Activated CD4-positive, alpha-beta T cell treated with anti-CD3 and anti-CD28 coated beads, Interleukin-2, amount 10 ng/mL, durations not matched to agents 24 days and 14 days (primary cell): ENCODE measurements at regions of chr12 and their contacts with region 1.

Region 1: DNA sequence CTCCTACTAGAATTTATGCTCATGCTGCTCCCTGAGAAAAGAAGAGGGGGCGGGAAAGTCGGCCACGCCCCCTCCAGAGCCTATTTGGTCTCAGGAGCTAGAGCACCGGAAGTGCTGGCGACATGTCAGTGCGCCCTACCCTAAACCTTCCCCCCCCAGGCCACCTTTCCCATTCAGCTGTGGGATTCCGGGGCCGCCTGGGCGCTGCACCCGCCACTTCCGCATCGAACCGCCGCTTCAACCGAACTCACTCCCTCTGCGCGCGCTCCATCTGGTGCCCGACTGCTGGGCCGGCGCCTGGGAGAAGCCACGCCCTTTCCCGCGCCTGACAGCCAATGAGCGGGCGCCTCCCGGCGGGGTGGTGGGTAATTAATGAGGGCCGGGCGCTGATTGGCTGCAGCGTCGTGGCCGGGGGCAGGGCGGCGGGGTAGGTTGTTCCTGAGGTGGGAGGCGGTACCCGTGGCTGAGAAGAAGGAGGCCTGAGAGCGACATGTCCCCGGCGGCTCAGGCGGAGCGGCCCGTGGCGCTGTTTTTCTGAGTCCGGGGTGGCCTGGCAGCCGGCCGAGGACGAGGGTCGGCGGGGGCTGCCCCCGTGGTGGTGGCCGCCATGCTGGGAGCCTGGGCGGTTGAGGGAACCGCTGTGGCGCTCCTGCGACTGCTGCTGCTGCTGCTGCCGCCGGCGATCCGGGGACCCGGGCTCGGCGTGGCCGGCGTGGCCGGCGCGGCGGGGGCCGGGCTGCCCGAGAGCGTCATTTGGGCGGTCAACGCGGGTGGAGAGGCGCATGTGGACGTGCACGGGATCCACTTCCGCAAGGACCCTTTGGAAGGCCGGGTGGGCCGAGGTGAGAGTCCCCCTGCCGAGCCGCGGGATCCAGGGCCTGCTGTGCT is at the start of gene MLEC:
- DNase-seq: peak; percentile 100
- H3K4me3 Mint-ChIP-seq: peak within 1 kb of the TSS; percentile 92
- H3K27ac Mint-ChIP-seq: peak within 1 kb of the TSS; percentile 96
- H3K4me1 Mint-ChIP-seq: peaks cover 53% of the 10 kb centered on the region
- H3K27me3 Mint-ChIP-seq: peaks cover 2% of the 10 kb centered on the region
- total RNA-seq, gene MLEC: 131 and 149 TPM in 2 replicates

Region 2: GRCh38 chr12:120495723-120496412 is 191.1 kb before region 1 on chr12 and contains the start of gene DYNLL1:
- intact Hi-C with region 1: loop called (anchors 1 kb)
- DNase-seq: peak; percentile 100
- H3K4me3 Mint-ChIP-seq: peak within 1 kb of the TSS; percentile 94
- H3K27ac Mint-ChIP-seq: peak within 1 kb of the TSS; percentile 82
- H3K4me1 Mint-ChIP-seq: peaks cover 31% of the 10 kb centered on the region
- H3K27me3 Mint-ChIP-seq: no peaks in the 10 kb centered on the region
- total RNA-seq, gene DYNLL1: 330 and 351 TPM in 2 replicates

Region 3: DNA sequence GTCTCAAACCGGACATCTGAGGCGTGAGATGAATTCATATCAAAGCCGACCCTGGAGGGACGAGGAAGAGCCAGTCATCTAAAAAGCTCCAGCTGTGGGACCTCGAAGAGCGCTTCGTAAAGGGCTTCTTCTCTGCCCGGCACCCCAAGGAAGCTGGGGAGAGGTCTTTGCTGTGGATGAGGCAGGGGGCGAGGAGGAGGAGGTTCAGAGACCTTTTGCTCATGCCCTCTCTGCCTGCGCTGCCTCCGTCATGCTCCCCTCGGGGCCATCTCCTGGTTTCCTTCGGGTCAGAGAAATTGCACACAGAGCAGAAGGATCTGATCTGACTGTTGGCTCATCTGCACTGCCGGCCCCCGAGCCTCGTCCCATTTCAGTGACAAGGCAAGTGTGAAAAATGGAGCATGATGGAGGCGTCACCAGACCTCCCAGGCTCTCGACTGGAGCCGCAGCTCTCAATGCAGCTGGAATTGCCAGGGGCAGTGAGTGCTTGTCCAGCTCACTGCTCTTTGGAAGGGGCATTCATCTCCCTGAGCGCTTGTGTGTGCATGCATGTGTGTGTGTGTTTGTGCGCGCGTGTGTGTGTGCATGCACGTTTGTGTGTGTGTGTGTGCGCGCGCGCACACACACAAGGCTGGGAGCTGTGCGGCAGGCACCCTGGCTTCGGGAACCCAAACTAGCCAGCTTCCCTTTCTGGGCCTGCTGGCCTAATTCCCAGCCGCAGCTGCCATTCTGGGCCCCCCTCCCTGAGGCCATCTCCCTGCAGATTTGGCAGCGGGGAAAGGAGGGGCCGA is 37.3 kb before region 1 on chr12:
- intact Hi-C with region 1: loop called (anchors 1 kb)
- DNase-seq: no peak
- H3K4me3 Mint-ChIP-seq: peak overlapping the region; percentile 62
- H3K27ac Mint-ChIP-seq: no peak overlapping the region
- H3K4me1 Mint-ChIP-seq: peaks cover 12% of the 10 kb centered on the region
- H3K27me3 Mint-ChIP-seq: peaks cover 53% of the 10 kb centered on the region

Region 4: GRCh38 chr12:120710031-120710804 is 23.3 kb after region 1 on chr12 and contains the start of gene UNC119B:
- intact Hi-C with region 1: loop called (anchors 1 kb)
- DNase-seq: peak; percentile 94
- H3K4me3 Mint-ChIP-seq: peak within 1 kb of the TSS; percentile 84
- H3K27ac Mint-ChIP-seq: peak within 1 kb of the TSS; percentile 76
- H3K4me1 Mint-ChIP-seq: peaks cover 23% of the 10 kb centered on the region
- H3K27me3 Mint-ChIP-seq: no peaks in the 10 kb centered on the region
- total RNA-seq, gene UNC119B: 25.5 and 26.2 TPM in 2 replicates

Region 5: GRCh38 chr12:120725659-120726509 is 39.0 kb after region 1 on chr12 and contains the start of gene ACADS:
- intact Hi-C with region 1: loop called (anchors 1 kb)
- DNase-seq: peak; percentile 98
- H3K4me3 Mint-ChIP-seq: peak within 1 kb of the TSS; percentile 97
- H3K27ac Mint-ChIP-seq: peak within 1 kb of the TSS; percentile 88
- H3K4me1 Mint-ChIP-seq: peaks cover 18% of the 10 kb centered on the region
- H3K27me3 Mint-ChIP-seq: no peaks in the 10 kb centered on the region
- total RNA-seq, gene ACADS: 11.7 and 12.8 TPM in 2 replicates

Region 6: DNA sequence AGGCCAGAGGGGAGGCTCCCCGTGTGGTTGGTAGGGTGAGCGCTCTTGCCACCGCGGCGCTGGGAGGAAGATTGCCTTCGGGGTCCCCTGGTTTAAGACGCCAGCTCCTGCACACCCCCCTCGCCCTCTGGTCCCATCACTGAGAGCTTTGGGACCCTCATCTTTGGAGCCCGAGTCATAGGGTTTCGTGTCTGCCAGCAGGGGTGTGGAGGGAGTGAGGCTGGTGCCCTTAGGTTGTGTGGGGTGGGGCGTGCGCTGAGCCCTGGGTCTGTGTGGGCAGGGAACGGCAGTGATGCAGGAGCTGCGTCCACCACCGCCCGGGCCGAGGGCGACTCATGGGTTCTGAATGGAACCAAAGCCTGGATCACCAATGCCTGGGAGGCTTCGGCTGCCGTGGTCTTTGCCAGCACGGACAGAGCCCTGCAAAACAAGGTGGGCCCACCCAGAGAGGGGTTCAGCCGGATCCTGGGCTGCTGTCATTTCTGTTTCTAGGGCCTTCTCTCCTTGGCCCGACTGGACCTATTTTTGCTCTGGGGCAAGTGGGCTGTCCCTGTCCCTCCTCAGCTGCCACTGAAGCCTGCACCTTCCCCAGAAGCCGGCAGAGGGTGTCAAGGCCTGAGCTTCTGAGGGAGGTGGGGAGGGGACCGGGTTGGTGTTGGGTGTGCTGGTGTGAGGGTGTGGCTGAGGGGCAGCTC is 50.8 kb after region 1 on chr12:
- intact Hi-C with region 1: no loop called
- DNase-seq: no peak
- H3K4me3 Mint-ChIP-seq: no peak overlapping the region
- H3K27ac Mint-ChIP-seq: no peak overlapping the region
- H3K4me1 Mint-ChIP-seq: no peaks in the 10 kb centered on the region
- H3K27me3 Mint-ChIP-seq: no peaks in the 10 kb centered on the region